ENCODE measurements at regions of chr9 and their contacts with region 1.

Region 1: DNA sequence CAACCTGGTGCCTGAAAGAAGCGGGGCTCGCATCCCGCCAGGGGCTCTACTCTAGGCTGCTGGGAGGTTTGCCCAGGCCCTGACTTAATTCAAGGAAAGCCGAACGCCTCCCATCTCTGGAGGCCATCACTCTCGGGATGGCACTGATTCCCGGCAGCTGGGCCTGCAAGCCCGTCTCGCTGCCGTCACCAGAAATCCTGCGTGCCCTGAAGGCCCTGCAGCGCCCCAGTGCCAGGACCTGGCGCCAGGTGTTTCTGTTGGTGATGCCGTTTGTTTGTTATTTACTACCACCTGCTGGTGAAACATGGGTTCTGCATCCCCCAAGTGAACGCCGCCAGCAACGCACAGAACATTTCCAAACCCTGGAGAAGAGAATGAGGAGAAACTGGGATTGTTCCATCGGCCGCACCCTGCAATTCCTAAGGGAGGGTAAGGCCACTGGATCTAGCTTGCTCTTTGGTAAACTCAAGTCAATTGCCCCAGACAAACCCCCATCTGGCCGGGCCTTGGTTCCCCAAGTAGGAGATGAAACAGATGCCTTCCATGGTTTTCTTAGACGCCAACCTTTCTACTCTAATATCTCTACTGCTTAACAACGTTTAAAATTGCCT is 77.9 kb downstream of the AK8 start:
- DNase-seq: peak; percentile 2
- H3K4me3 ChIP-seq: no peak overlapping the region
- H3K27me3 ChIP-seq: peaks cover 14% of the 10 kb centered on the region
- CTCF ChIP-seq: peak; percentile 81

Region 2: GRCh38 chr9:132507746-132508469 is 292.2 kb before region 1 on chr9:
- CTCF ChIA-PET with region 1: interaction called, 34 read pairs
- POLR2A ChIA-PET with region 1: no interaction called
- DNase-seq: no peak
- H3K4me3 ChIP-seq: no peak overlapping the region
- H3K27me3 ChIP-seq: peaks cover 23% of the 10 kb centered on the region
- CTCF ChIP-seq: peak; percentile 84

Region 3: DNA sequence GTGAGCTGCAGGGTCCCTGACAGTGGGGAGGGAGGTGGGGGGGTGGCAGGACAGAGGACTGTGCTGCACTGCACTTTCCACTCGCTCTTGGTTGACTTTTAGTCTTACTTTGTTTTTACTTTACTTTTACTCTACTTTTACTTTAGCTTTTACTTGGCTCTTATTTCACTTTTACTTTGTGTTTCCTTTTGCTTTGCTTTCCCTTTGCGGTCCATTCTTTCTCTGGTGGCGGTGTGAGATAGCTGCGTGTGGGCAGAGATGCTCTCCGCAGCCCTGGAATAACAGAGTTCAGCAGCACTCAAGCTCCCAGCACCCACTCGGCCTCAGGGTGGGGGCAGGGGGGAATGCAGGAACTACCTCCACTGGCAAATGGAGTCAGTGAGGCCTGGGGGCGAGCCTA is 73.3 kb after region 1 on chr9:
- CTCF ChIA-PET with region 1: no interaction called
- POLR2A ChIA-PET with region 1: no interaction called
- DNase-seq: no peak
- H3K4me3 ChIP-seq: no peak overlapping the region
- H3K27me3 ChIP-seq: no peaks in the 10 kb centered on the region
- CTCF ChIP-seq: no peak

Measured in BJ (cell line).